Left lung (tissue), 14 donors: ENCODE measurements at regions of chr11 and their contacts with region 1.

Region 1: GRCh38 chr11:72026090-72026489 is 27.4 kb downstream of the IL18BP start:
- DNase-seq: no peak
- ATAC-seq: no peak
- H3K4me3 ChIP-seq: no peak overlapping the region
- H3K27ac ChIP-seq: peak overlapping the region in 1 of 2 donors; percentile 34
- H3K4me1 ChIP-seq: peaks cover 9 to 50% of the 10 kb centered on the region in 2 donors
- H3K27me3 ChIP-seq: no peaks in the 10 kb centered on the region
- CTCF ChIP-seq: no peak

Region 2: GRCh38 chr11:72091005-72091691 is 65.1 kb after region 1 on chr11:
- intact Hi-C with region 1: loop called in 1 of 2 experiments (anchors 5 kb)
- DNase-seq: peak in 3 of 4 donors; percentile 42 to 78 (median 73)
- ATAC-seq: peak; percentile 98
- H3K4me3 ChIP-seq: no peak overlapping the region
- H3K27ac ChIP-seq: peak overlapping the region in 1 of 2 donors; percentile 81
- H3K4me1 ChIP-seq: peaks cover 7 to 17% of the 10 kb centered on the region in 2 donors
- H3K27me3 ChIP-seq: no peaks in the 10 kb centered on the region
- CTCF ChIP-seq: peak; percentile 88 to 91